Body of pancreas (tissue), 4 donors: ENCODE measurements at regions of chr18 and their contacts with region 1.

Region 1: GRCh38 chr18:24019641-24020331 is 5.2 kb downstream of the TTC39C start:
- DNase-seq: no peak
- ATAC-seq: no peak
- H3K4me3 ChIP-seq: no peak overlapping the region
- H3K27ac ChIP-seq: no peak overlapping the region
- H3K4me1 ChIP-seq: peaks cover 22% of the 10 kb centered on the region
- H3K27me3 ChIP-seq: no peaks in the 10 kb centered on the region
- CTCF ChIP-seq: no peak
- POLR2A ChIP-seq: no peak

Region 2: DNA sequence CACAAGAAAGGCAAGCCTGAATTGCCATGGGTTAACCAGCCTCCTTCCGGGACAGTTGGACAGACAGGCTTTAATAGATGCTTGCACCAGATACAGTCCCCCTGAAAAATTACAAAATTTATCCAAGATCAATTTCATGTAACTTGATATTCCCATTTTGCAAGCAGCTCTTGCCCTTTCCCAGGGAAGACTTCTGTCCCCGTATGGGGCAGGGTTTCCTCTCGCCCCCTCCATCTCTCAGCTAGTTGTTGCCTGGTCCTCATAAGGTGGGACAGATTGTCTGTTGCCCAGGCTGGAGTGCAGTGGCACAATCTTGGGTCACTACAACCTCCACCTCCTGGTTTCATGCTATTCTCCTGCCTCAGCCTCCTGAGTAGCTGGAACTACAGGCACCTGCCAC is 55.9 kb after region 1 on chr18:
- intact Hi-C with region 1: loop called (anchors 10 kb)
- DNase-seq: no peak
- ATAC-seq: no peak
- H3K4me3 ChIP-seq: no peak overlapping the region
- H3K27ac ChIP-seq: peak overlapping the region in 2 of 4 donors; percentile 8 to 42
- H3K4me1 ChIP-seq: no peaks in the 10 kb centered on the region
- H3K27me3 ChIP-seq: no peaks in the 10 kb centered on the region
- CTCF ChIP-seq: no peak
- POLR2A ChIP-seq: no peak

Region 3: DNA sequence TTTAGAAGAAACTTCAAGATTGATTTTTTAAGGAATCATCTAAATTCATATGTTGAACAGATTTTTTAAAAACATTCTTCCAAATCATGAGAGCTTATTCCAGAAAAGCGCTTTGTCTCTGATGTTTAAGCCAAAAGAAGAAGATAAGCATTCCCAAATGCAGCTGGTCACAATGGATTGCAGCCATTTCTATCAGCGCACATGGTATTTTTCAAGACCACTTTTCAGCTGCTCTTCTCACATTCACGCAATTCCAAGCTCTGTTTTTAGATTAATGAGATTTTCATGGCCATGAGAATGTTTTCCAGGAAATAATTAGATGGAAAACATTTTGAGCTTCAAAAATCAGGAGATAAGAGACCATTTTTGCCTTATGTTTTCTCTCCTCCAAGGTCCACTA is 369.2 kb after region 1 on chr18:
- intact Hi-C with region 1: no loop called
- DNase-seq: no peak
- ATAC-seq: no peak
- H3K4me3 ChIP-seq: no peak overlapping the region
- H3K27ac ChIP-seq: no peak overlapping the region
- H3K4me1 ChIP-seq: no peaks in the 10 kb centered on the region
- H3K27me3 ChIP-seq: no peaks in the 10 kb centered on the region
- CTCF ChIP-seq: no peak
- POLR2A ChIP-seq: no peak